Ascending aorta (tissue), 2 donors: ENCODE measurements at regions of chr4 and their contacts with region 1.

Region 1: DNA sequence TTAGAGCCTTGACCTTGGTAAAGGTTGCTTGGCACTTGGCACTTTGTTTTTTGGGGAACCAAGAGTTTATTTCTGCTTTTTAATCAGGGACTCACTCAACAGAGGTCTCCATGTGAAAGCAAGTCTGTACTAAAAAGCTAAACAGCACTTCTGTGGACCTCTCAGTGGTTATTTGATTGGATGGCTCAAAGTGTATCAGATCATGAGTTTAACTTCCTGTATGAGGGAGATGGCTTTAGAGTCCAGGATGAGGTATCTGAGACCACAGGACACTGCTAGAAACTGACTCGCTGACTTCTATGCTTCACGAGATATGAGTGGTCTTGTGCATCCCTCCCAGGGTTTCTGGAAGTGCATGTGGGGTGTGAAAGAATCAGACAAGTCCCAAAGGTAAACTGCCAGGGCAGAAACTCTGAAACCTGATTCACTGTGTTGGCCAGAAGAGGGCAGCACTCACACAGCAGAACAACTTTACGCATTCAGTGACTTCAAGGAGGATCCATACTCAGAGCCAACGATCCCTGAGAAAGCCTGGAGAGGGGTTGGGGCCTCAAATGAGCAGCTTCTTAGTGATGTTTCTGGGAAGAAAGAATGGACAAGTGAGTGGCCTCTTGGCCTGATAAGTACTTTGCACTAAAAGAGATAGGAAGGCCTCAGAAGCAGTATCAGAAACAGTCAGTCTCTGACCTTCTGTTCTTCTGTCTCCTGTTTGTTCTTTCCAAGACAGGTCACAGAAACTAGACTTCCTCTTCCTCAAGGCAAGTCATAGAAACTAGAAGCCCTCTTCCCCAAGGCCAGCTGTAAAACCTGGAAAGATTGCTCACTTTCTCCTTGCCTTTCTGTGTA is 220.3 kb upstream of the CXCL13 start:
- DNase-seq: peak in 1 of 2 donors; percentile 75
- H3K4me3 ChIP-seq: no peak overlapping the region
- H3K27ac ChIP-seq: no peak overlapping the region
- H3K4me1 ChIP-seq: no peaks in the 10 kb centered on the region
- H3K27me3 ChIP-seq: no peaks in the 10 kb centered on the region
- CTCF ChIP-seq: peak; percentile 67 to 87 (median 72)

Region 2: DNA sequence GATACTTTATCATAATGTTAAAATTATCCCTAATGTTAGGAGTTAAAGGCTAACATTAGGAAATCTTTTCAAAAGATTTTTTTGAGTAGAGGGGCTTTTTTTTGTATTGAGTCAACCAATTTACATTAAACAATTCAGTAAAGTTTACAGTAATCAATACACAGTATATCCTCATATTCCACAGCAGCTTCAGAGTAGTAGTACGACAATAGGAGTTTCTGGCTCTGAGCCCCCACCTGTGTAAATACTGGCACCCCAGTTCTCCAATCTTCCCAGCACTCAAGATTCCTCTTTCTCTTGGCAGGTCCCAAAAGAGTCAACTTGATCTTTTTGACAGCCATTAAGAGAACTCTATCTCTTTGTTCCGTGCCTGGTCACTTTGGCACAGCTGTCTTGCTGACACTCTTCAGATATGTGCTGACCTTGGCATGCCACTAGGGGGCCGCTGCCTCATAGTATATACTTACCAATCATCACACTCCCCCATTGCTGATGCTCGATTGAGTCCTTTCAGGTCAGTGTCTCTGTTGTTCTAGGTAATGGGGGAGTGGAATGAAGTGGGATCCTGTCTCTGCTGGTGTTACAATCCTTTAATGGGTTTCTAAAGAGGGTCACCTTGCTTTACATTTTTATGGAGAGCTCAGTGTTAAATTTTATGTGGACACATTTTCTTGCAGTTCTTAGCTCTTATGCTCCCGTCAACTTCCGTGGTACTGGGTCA is 290.1 kb before region 1 on chr4:
- intact Hi-C with region 1: no loop called
- DNase-seq: peak; percentile 34 to 90
- H3K4me3 ChIP-seq: no peak overlapping the region
- H3K27ac ChIP-seq: peak overlapping the region in 1 of 2 donors; percentile 51
- H3K4me1 ChIP-seq: peaks cover 0 to 8% of the 10 kb centered on the region in 2 donors
- H3K27me3 ChIP-seq: no peaks in the 10 kb centered on the region
- CTCF ChIP-seq: peak; percentile 52 to 81 (median 80)

Region 3: DNA sequence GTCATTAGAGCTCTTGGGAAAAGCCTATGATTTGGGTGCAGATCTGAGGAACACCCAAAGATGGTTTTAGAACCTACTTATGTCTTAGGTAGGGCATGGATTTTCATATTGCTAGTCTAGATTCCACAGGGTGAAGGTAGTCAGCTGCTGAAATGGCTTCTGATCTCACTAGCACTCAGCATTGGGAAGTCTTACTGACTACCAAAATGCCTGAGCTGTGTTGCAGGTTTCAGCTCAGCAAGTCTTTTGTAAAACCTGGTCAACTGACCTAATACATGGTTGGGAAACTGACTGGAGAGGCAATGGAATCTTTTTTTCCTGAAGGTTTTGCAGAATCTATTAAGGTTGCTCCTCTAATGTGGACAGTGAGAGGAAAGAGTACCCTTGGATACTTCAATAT is 91.9 kb before region 1 on chr4:
- intact Hi-C with region 1: no loop called
- DNase-seq: no peak
- H3K4me3 ChIP-seq: no peak overlapping the region
- H3K27ac ChIP-seq: no peak overlapping the region
- H3K4me1 ChIP-seq: no peaks in the 10 kb centered on the region
- H3K27me3 ChIP-seq: no peaks in the 10 kb centered on the region
- CTCF ChIP-seq: no peak

Region 4: GRCh38 chr4:77433418-77433733 is 48.0 kb after region 1 on chr4:
- intact Hi-C with region 1: loop called (anchors 2 kb)
- DNase-seq: no peak
- H3K4me3 ChIP-seq: peak overlapping the region in 1 of 2 donors; percentile 26
- H3K27ac ChIP-seq: peak overlapping the region; percentile 60 to 62
- H3K4me1 ChIP-seq: peaks cover 0 to 14% of the 10 kb centered on the region in 2 donors
- H3K27me3 ChIP-seq: no peaks in the 10 kb centered on the region
- CTCF ChIP-seq: peak; percentile 35 to 57 (median 49)

Region 5: GRCh38 chr4:77538560-77539157 is 153.3 kb after region 1 on chr4:
- intact Hi-C with region 1: no loop called
- DNase-seq: no peak
- H3K4me3 ChIP-seq: no peak overlapping the region
- H3K27ac ChIP-seq: no peak overlapping the region
- H3K4me1 ChIP-seq: no peaks in the 10 kb centered on the region
- H3K27me3 ChIP-seq: no peaks in the 10 kb centered on the region
- CTCF ChIP-seq: no peak

Region 6: GRCh38 chr4:77600521-77601451 is 215.4 kb after region 1 on chr4:
- intact Hi-C with region 1: loop called (anchors 1 kb)
- DNase-seq: no peak
- H3K4me3 ChIP-seq: no peak overlapping the region
- H3K27ac ChIP-seq: no peak overlapping the region
- H3K4me1 ChIP-seq: no peaks in the 10 kb centered on the region
- H3K27me3 ChIP-seq: no peaks in the 10 kb centered on the region
- CTCF ChIP-seq: peak; percentile 30 to 78 (median 65)

Region 7: DNA sequence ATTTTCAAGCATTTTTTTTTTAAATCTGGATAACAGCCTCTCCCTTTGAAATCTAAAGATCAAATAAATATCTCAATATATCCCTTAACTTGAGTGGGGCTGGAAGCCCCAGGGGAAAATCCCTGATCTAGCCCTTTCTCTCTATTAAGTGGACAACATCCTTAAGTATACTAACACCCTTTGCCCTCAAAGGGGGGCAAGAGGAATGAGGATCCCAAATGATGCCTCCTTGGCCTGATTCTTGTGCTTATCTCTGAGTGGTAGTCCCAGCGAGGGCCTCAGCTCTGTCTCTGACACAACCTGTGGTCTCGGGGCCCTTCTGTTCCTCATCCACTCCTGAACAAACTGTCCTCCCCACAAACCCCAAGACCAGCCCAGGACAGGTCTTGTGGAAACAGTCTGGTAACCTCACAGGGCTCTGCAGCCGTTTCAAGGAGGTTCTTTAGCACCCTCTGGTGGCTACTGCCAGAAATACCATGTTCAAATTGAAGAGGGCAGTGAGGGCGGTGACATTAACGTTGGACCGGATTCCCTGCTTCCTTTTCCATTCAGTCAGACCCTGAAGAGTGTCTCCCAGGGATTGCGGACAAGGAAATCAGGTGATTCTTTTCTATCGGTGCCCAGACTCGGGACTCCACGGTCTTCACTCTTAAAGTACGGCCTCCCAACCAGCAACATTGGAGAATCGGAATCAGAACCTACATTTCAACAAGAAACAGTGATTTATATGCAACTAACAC is 233.2 kb after region 1 on chr4:
- intact Hi-C with region 1: loop called (anchors 1 kb)
- DNase-seq: peak in 1 of 2 donors; percentile 79
- H3K4me3 ChIP-seq: peak overlapping the region in 1 of 2 donors; percentile 5
- H3K27ac ChIP-seq: no peak overlapping the region
- H3K4me1 ChIP-seq: peaks cover 0 to 3% of the 10 kb centered on the region in 2 donors
- H3K27me3 ChIP-seq: no peaks in the 10 kb centered on the region
- CTCF ChIP-seq: peak; percentile 41 to 87 (median 67)